GM13977 (cell line): ENCODE measurements at regions of chr2 and their contacts with region 1.

Region 1: GRCh38 chr2:191521608-191522208 is 156.2 kb upstream of the NABP1 start:
- DNase-seq: peak; percentile 41
- CTCF ChIP-seq: peak; percentile 56

Region 2: GRCh38 chr2:191051825-191052778 is 469.6 kb before region 1 on chr2:
- in situ Hi-C with region 1: loop called (anchors 25 kb)
- DNase-seq: peak; percentile 44
- CTCF ChIP-seq: peak; percentile 59

Region 3: DNA sequence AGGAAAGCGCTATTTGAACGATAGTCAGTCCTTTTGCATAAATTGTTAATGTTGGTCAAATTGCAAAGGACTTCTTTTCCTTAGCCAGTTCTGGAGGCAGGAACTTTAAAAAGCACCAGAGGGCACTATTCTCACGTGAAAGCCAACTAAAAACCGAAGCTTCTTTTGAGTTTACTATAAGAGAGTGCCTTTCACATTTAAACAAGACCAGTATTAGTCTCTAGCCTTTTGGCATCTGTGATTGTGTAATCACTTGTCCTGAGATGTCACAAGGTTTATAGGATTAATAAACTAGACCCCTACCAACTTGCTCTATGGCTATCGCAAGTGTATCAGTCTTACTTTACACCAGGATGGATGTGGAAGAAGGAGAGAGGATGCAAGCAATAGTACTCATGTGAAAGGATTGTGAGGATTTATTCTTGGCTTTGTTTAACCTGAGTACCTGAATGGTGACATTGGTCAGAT is 356.5 kb before region 1 on chr2:
- in situ Hi-C with region 1: loop called (anchors 25 kb)
- DNase-seq: peak; percentile 43
- CTCF ChIP-seq: peak; percentile 56

Region 4: GRCh38 chr2:191436368-191437055 is 85.2 kb before region 1 on chr2:
- in situ Hi-C with region 1: no loop called
- DNase-seq: no peak
- CTCF ChIP-seq: no peak

Region 5: GRCh38 chr2:191446910-191447309 is 74.8 kb before region 1 on chr2:
- in situ Hi-C with region 1: no loop called
- DNase-seq: no peak
- CTCF ChIP-seq: no peak